CD4-positive, alpha-beta T cell (primary cell): ENCODE measurements at regions of chr11 and their contacts with region 1.

Region 1: DNA sequence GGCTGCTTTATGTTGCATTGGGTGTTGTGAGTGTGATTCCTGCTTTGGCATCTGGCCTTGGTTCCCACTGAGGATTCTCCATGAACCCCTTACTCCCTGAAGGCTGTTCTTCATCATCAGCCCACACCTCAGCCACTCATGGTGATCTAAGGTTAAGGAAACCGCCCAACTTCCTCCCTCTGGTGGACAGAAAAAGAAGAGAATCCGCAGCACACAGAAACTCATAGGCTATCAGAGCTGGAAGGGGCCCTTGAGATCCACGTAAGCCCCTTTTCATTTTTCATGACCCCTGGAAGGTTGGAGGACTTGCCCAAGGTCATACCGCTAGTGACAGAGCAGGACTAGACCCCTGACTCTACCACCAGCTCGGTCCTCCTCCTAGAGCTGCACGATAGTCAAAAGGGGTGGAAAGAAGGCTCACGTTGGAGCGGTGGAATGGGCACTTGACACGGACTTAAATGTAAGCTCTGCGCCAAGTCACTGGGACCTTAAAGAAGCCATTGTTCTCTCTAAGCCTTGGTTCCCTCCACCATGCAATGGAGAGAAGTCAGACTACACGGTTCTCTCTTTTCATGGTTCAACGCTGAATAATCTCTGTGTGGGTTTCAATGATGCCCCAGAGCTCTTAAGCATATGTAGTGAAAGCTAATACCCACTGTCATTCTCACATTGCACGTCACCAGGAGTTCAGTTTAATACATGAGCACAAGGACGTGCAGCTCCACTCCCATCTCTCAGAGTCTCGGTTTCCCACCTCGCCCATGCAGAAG is 83.6 kb upstream of the CRTAM start:
- DNase-seq: peak in 13 of 14 experiments; percentile 14 to 75 (median 27)
- ATAC-seq: peak; percentile 64
- H3K4me3 ChIP-seq: no peak overlapping the region
- H3K4me3 Mint-ChIP-seq: no peak overlapping the region
- H3K27ac ChIP-seq: no peak overlapping the region
- H3K27ac Mint-ChIP-seq: peak overlapping the region; percentile 5
- H3K4me1 ChIP-seq: peaks cover 39% of the 10 kb centered on the region
- H3K4me1 Mint-ChIP-seq: peaks cover 67% of the 10 kb centered on the region
- H3K27me3 ChIP-seq: no peaks in the 10 kb centered on the region
- H3K27me3 Mint-ChIP-seq: no peaks in the 10 kb centered on the region
- CTCF ChIP-seq: peak; percentile 69

Region 2: DNA sequence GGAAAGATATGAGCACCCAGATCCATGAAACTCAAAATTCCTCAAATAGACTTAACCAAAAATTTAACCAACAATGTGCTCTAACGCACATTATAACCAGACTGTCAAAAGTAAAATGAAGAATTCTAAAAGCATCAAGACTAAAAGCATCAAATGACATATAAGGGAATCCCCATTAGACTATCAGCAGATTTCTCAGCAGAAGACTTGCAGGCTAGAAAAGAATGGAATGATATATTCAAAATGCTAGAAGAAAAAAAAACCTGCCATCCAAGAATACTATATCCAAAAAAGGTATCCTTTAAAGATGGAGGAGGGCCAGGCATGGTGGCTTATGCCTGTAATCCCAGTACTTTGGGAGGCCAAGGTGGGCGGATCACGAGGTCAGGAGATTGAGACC is 216.7 kb before region 1 on chr11:
- CTCF ChIA-PET with region 1: no interaction called
- POLR2A ChIA-PET with region 1: no interaction called
- intact Hi-C with region 1: no loop called
- DNase-seq: no peak
- ATAC-seq: no peak
- H3K4me3 ChIP-seq: no peak overlapping the region
- H3K4me3 Mint-ChIP-seq: no peak overlapping the region
- H3K27ac ChIP-seq: no peak overlapping the region
- H3K27ac Mint-ChIP-seq: no peak overlapping the region
- H3K4me1 ChIP-seq: no peaks in the 10 kb centered on the region
- H3K4me1 Mint-ChIP-seq: no peaks in the 10 kb centered on the region
- H3K27me3 ChIP-seq: peaks cover 0 to 2% of the 10 kb centered on the region in 2 experiments
- H3K27me3 Mint-ChIP-seq: peaks cover 7% of the 10 kb centered on the region
- CTCF ChIP-seq: no peak

Region 3: GRCh38 chr11:122578168-122578825 is 176.4 kb before region 1 on chr11:
- CTCF ChIA-PET with region 1: interaction called, 7 read pairs
- POLR2A ChIA-PET with region 1: no interaction called
- intact Hi-C with region 1: loop called (anchors 1 kb)
- DNase-seq: no peak
- ATAC-seq: no peak
- H3K4me3 ChIP-seq: no peak overlapping the region
- H3K4me3 Mint-ChIP-seq: no peak overlapping the region
- H3K27ac ChIP-seq: no peak overlapping the region
- H3K27ac Mint-ChIP-seq: no peak overlapping the region
- H3K4me1 ChIP-seq: peaks cover 8% of the 10 kb centered on the region
- H3K4me1 Mint-ChIP-seq: peaks cover 7% of the 10 kb centered on the region
- H3K27me3 ChIP-seq: no peaks in the 10 kb centered on the region
- H3K27me3 Mint-ChIP-seq: peaks cover 8% of the 10 kb centered on the region
- CTCF ChIP-seq: no peak

Region 4: DNA sequence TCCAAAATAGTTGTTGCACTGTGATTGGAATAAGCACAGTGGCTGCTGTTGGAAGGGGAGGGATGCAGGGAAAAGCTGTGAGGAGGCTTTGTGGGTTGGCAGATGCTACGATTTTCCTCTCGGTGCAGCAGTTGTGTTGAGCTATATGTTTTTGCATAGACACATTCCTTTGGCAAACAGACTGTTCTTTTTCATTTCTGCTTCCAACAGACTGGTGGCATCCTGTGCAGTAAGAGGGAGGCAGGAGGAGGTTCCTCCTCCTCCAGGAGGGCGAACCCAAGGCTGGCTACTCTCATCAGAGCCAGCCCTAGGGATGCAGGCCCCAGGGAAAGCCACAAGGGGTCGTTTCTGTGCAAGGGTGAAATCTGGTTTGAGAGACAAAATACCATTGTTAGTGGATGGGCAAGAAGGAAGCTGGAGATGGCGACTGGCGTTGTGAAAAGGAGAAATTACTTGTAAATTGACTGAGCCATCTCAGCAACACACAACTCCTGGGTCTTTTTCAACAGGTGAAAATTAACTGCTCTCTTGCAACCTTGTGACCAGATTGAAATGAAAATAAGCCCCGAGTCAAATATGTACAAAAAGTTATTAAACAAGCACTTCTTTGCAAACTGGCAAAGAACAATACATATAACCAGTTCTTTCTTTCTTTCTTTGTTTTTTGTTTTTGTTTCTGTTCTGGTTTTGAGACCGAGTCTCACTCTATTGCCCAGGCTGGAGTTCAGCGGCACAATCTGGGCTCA is 125.8 kb before region 1 on chr11:
- CTCF ChIA-PET with region 1: interaction called, 17 read pairs
- POLR2A ChIA-PET with region 1: no interaction called
- intact Hi-C with region 1: loop called (anchors 1 kb)
- DNase-seq: peak; percentile 40 to 81 (median 64)
- ATAC-seq: peak; percentile 80
- H3K4me3 ChIP-seq: no peak overlapping the region
- H3K4me3 Mint-ChIP-seq: no peak overlapping the region
- H3K27ac ChIP-seq: no peak overlapping the region
- H3K27ac Mint-ChIP-seq: no peak overlapping the region
- H3K4me1 ChIP-seq: no peaks in the 10 kb centered on the region
- H3K4me1 Mint-ChIP-seq: peaks cover 14% of the 10 kb centered on the region
- H3K27me3 ChIP-seq: no peaks in the 10 kb centered on the region
- H3K27me3 Mint-ChIP-seq: no peaks in the 10 kb centered on the region
- CTCF ChIP-seq: peak; percentile 65

Region 5: DNA sequence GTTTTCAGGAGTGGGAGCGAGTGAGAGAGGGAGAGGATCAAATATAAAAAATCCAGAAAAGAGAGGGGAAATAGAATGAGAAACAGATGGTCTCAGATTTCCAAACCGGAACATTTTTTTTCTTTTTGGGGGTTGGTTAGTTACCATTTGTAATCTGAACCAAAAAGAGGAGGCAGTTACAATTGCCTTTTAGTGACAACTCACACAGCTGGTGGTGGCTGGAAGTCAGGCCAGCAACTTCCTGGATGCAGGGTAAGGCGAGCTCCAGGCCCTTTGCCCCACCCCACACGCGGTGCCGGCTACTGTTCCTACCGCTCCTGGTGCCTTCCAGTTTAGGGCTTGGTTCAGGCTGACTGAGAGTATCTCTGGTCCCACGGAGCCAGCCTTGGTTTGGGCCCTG is 120.2 kb before region 1 on chr11:
- CTCF ChIA-PET with region 1: interaction called, 17 read pairs
- POLR2A ChIA-PET with region 1: interaction called, 3 read pairs
- intact Hi-C with region 1: loop called (anchors 1 kb)
- DNase-seq: no peak
- ATAC-seq: no peak
- H3K4me3 ChIP-seq: no peak overlapping the region
- H3K4me3 Mint-ChIP-seq: no peak overlapping the region
- H3K27ac ChIP-seq: no peak overlapping the region
- H3K27ac Mint-ChIP-seq: no peak overlapping the region
- H3K4me1 ChIP-seq: peaks cover 4% of the 10 kb centered on the region
- H3K4me1 Mint-ChIP-seq: peaks cover 15% of the 10 kb centered on the region
- H3K27me3 ChIP-seq: no peaks in the 10 kb centered on the region
- H3K27me3 Mint-ChIP-seq: no peaks in the 10 kb centered on the region
- CTCF ChIP-seq: no peak

Region 6: DNA sequence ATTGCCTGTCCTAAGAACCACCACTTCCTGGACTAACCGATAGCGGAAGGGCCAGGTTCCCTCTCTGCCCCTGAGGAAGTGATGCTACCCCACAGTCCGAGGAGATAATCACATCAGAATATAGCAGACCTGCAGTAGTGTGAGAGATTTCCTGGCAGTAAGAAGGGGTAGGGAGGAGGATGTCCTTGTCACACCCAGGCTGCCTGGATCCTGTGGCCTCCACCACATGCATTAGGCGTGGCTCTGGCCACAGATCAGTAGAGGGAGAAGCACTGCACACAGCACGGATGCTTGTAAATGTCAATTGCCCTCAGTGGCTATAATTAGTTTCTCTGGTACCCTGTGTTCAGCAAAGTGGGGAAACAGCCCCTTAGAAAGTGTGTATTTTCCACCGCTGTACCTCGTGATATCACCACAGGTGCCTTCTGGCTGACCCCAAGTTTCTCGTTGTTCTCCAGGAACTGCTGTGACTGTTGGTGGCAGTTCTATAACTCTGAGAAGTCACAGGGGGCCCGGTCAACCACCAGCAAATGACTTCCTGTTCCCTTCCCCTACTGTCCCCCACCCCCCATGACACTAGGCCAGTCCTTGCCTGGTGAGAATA is 37.4 kb before region 1 on chr11:
- CTCF ChIA-PET with region 1: no interaction called
- POLR2A ChIA-PET with region 1: no interaction called
- intact Hi-C with region 1: loop called in 1 of 2 experiments (anchors 5 kb)
- DNase-seq: peak in 4 of 14 experiments; percentile 29 to 71 (median 40)
- ATAC-seq: no peak
- H3K4me3 ChIP-seq: no peak overlapping the region
- H3K4me3 Mint-ChIP-seq: no peak overlapping the region
- H3K27ac ChIP-seq: peak overlapping the region in 1 of 2 donors; percentile 3
- H3K27ac Mint-ChIP-seq: peak overlapping the region; percentile 42
- H3K4me1 ChIP-seq: peaks cover 51% of the 10 kb centered on the region
- H3K4me1 Mint-ChIP-seq: peaks cover 66% of the 10 kb centered on the region
- H3K27me3 ChIP-seq: no peaks in the 10 kb centered on the region
- H3K27me3 Mint-ChIP-seq: no peaks in the 10 kb centered on the region
- CTCF ChIP-seq: no peak

Region 7: GRCh38 chr11:122743949-122744348 is 10.8 kb before region 1 on chr11:
- CTCF ChIA-PET with region 1: interaction called, 5 read pairs
- POLR2A ChIA-PET with region 1: interaction called, 12 read pairs
- intact Hi-C with region 1: no loop called
- DNase-seq: peak; percentile 36 to 92 (median 70)
- ATAC-seq: peak; percentile 71
- H3K4me3 ChIP-seq: peak overlapping the region; percentile 34
- H3K4me3 Mint-ChIP-seq: no peak overlapping the region
- H3K27ac ChIP-seq: peak overlapping the region; percentile 66 to 71
- H3K27ac Mint-ChIP-seq: no peak overlapping the region
- H3K4me1 ChIP-seq: peaks cover 77% of the 10 kb centered on the region
- H3K4me1 Mint-ChIP-seq: peaks cover 36% of the 10 kb centered on the region
- H3K27me3 ChIP-seq: no peaks in the 10 kb centered on the region
- H3K27me3 Mint-ChIP-seq: no peaks in the 10 kb centered on the region
- CTCF ChIP-seq: no peak

Region 8: DNA sequence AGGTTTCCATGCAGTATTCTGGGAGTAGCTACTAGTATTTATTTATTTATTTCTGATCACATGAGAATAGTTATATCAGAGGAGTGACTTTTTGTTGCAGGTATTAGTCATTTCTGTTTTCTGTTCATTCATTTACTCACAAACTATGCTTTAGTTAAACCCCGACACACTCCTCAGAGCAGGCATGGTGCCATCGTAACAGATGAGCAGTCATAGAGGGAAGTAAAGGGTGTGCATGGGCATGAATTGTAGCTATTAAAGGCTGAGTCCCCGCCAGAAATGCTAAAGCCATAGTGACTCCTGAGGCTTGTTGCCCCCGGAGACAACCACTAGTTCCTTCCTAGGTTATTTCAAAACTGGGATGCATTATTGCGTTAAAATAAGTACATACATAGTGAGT is 138.4 kb after region 1 on chr11:
- CTCF ChIA-PET with region 1: no interaction called
- POLR2A ChIA-PET with region 1: no interaction called
- intact Hi-C with region 1: no loop called
- DNase-seq: no peak
- ATAC-seq: no peak
- H3K4me3 ChIP-seq: no peak overlapping the region
- H3K4me3 Mint-ChIP-seq: no peak overlapping the region
- H3K27ac ChIP-seq: no peak overlapping the region
- H3K27ac Mint-ChIP-seq: no peak overlapping the region
- H3K4me1 ChIP-seq: no peaks in the 10 kb centered on the region
- H3K4me1 Mint-ChIP-seq: peaks cover 4% of the 10 kb centered on the region
- H3K27me3 ChIP-seq: no peaks in the 10 kb centered on the region
- H3K27me3 Mint-ChIP-seq: no peaks in the 10 kb centered on the region
- CTCF ChIP-seq: no peak